Testis (tissue), 5 donors: ENCODE measurements at regions of chr1 and their contacts with region 1.

Region 1: GRCh38 chr1:110766025-110766647 is 91.4 kb upstream of the KCNA3 start:
- DNase-seq: peak; percentile 57
- H3K4me3 ChIP-seq: no peak overlapping the region
- H3K27ac ChIP-seq: no peak overlapping the region
- H3K4me1 ChIP-seq: no peaks in the 10 kb centered on the region
- H3K27me3 ChIP-seq: no peaks in the 10 kb centered on the region
- CTCF ChIP-seq: peak; percentile 77 to 86 (median 81)
- POLR2A ChIP-seq: no peak

Region 2: DNA sequence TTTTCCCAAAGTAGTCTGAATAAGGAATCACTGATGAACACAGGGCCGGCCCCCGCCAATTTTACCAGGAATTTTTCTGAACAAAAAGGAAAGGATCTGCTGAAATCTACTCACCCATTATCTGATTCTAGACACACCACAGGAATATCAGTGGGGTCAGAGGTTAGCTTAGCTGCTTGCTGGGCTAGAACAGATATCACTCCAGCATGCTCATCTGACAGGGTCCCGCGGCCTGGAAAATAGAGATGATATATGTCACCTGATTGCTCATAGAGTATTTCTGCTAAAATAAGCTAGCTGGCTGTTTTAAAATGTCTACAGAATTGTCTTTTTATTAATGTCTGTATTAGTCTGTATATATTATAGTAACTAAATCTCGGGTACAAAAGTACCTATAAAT is 362.3 kb before region 1 on chr1:
- intact Hi-C with region 1: no loop called
- DNase-seq: no peak
- H3K4me3 ChIP-seq: no peak overlapping the region
- H3K27ac ChIP-seq: no peak overlapping the region
- H3K4me1 ChIP-seq: peaks cover 10% of the 10 kb centered on the region
- H3K27me3 ChIP-seq: no peaks in the 10 kb centered on the region
- CTCF ChIP-seq: no peak
- POLR2A ChIP-seq: no peak

Region 3: DNA sequence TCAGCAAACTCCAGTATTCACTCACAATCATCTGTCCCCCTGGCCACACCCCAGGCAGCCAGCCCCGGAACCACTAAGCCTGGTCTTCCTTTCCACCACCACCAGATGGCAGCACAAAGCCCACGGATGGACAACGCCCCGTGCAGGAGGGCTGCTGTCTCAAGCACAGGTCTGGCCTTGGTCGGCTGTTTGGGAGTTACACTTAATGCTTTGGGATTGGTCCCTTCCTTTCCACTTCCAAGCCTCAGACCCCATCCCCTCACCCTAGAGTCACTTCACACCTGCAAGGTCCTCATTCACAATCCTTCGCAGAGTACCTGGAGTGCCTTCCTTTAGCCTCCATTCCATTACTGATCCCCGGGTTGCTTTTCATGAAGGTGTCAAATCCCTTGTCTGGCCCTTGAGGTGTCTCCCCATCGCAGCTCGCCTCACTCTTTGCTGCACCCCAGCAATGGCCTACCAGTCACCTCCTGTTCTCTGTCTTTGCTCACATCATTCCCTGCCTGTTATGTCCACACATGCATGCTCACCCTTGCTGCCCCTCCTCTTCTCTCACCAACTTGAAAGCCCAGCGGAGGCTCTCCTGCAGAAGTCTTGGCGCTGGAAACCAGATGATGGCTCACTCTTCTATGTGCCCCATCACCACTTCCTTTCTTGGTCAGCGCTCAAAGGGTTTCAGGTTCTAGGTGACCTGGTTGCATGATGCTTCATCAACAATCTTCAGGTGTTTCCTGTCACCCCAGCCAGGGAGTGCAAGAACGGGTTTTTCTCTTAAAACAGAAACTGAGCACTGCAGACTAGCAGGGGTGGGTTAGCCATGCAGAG is 135.1 kb before region 1 on chr1:
- intact Hi-C with region 1: loop called (anchors 5 kb)
- DNase-seq: peak; percentile 84
- H3K4me3 ChIP-seq: no peak overlapping the region
- H3K27ac ChIP-seq: no peak overlapping the region
- H3K4me1 ChIP-seq: peaks cover 5% of the 10 kb centered on the region
- H3K27me3 ChIP-seq: no peaks in the 10 kb centered on the region
- CTCF ChIP-seq: peak; percentile 57 to 82 (median 66)
- POLR2A ChIP-seq: no peak

Region 4: DNA sequence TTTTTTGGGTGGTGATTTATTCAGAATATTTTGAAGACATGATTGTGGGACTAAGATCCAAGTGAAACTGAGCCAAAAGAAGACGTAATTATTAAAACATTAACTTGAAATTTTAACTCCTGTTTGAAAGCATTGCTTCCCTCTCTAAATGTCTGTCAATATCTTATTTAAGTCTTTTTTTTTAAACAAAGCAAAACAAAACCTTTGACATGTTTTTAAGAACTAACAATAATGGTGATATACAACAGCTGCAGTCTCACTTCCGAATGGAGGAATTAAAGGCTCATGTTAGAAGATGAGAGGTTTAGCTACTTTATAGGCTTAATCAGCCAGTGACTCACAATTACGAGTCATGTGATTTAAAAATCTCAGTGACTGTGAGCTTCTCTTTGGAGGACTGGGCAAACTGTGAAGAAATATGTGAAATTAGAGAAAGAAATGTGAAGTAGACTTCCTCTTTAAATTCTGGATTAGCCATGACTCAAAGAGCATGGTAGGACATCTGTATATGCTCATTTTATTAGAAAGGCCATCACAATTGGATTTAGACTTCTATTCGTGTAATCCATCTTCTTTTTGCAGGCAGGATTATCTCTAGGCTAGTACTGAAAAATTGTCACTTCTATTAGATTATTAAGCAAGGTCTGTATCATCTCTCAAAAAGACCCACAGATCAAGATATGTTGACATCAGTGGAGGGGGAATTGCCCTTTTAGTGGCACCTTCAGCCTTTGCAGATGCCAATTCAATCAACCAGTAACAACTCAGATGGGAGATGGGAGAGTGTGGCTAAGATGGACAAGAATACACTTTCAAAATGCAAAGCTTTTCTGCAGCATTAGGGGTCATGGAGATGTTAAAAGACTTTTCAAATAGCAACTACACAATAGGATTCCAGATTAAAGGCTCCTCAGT is 120.1 kb before region 1 on chr1:
- intact Hi-C with region 1: no loop called
- DNase-seq: no peak
- H3K4me3 ChIP-seq: no peak overlapping the region
- H3K27ac ChIP-seq: no peak overlapping the region
- H3K4me1 ChIP-seq: no peaks in the 10 kb centered on the region
- H3K27me3 ChIP-seq: no peaks in the 10 kb centered on the region
- CTCF ChIP-seq: no peak
- POLR2A ChIP-seq: no peak